Aorta (tissue), 5 donors: ENCODE measurements at regions of chr6 and their contacts with region 1.

Region 1: GRCh38 chr6:144482142-144482541 is 197.0 kb downstream of the UTRN start:
- DNase-seq: peak; percentile 82 to 89
- ATAC-seq: peak; percentile 65
- H3K4me3 ChIP-seq: no peak overlapping the region
- H3K27ac ChIP-seq: no peak overlapping the region
- H3K4me1 ChIP-seq: peaks cover 3 to 7% of the 10 kb centered on the region in 2 donors
- H3K27me3 ChIP-seq: no peaks in the 10 kb centered on the region

Region 2: DNA sequence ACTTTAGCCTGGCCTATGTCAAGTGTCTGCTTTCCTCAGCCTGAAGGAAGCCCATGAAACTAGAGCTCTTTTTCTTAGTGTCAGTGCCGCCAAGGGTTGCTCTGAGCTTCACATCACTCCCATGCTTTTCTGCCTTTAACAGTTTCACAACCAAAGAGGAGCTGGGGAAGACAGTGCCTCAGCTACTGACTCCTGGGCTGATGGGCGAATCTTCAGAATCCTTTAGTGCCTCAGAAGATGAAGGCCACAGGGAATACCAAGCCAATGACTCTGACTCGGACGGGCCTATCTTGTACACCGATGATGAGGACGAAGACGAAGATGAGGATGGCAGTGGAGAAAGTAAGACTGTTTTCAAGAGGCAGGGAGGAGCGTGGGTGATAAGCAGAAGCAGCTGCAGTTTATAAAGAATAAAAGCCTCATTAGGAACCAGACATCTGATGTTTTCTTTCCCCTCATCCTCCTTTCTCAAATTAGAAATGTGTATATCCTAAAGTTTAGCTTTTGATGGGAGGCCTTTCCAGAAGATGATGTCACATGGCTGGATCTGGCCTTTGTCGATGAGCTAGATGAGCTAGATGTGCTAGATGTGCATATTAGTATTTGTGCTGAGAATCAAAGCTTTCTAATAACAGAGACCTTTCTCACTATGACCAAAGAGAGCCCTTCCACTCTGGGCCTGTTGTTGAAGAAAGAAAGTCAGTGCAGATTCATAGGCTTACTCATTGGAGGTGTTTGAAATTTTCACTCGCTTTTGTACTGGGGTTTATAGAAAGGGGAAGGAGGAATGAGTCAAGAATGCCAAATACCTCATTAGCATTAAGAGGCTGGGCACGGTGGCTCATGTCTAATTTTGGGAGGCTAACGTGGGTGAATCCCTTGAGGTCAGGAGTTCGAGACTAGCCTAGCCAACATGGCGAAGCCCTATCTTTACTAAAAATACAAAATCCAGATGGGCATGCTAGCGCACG is 709.7 kb before region 1 on chr6:
- intact Hi-C with region 1: no loop called
- DNase-seq: no peak
- ATAC-seq: no peak
- H3K4me3 ChIP-seq: no peak overlapping the region
- H3K27ac ChIP-seq: no peak overlapping the region
- H3K4me1 ChIP-seq: peaks cover 7% of the 10 kb centered on the region in 2 donors
- H3K27me3 ChIP-seq: no peaks in the 10 kb centered on the region

Region 3: GRCh38 chr6:144095331-144096002 is 386.7 kb before region 1 on chr6 and contains the start of gene SF3B5:
- intact Hi-C with region 1: loop called in 1 of 2 experiments (anchors 5 kb)
- DNase-seq: peak; percentile 99 to 100
- ATAC-seq: peak; percentile 100
- H3K4me3 ChIP-seq: peak within 1 kb of the TSS; percentile 50 to 81
- H3K27ac ChIP-seq: peak within 1 kb of the TSS; percentile 11 to 15
- H3K4me1 ChIP-seq: peaks cover 0 to 6% of the 10 kb centered on the region in 2 donors
- H3K27me3 ChIP-seq: no peaks in the 10 kb centered on the region
- total RNA-seq, gene SF3B5: 75.2 to 82.4 TPM

Region 4: DNA sequence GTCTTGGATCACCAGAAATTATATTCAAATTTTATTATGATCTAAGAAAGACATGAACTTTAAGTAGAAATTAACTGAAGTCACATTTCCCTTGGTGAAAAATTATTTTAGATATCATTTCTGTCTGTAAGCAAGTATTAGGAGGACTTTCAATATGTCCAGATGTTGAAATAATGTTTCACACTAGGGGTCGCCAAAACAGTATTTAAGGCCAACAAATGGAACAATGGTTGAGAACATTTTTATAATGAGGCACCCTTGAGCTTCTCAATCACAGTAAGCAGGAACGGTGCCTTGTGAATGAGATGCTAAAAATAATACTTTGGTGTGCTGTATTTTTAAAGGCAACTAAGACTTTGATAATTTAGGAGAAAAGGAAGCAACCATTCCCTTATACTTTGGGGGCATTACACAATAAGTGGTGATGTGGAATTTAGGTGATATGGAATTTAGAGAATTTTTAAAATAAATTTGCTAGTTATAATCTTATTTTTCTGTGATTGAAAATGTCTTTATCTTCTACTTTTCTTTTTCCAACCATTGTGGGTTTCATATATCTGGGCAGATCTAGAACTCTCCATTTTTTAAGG is 377.1 kb before region 1 on chr6:
- intact Hi-C with region 1: loop called (anchors 5 kb)
- DNase-seq: no peak
- ATAC-seq: peak; percentile 85
- H3K4me3 ChIP-seq: no peak overlapping the region
- H3K27ac ChIP-seq: no peak overlapping the region
- H3K4me1 ChIP-seq: no peaks in the 10 kb centered on the region
- H3K27me3 ChIP-seq: no peaks in the 10 kb centered on the region

Region 5: DNA sequence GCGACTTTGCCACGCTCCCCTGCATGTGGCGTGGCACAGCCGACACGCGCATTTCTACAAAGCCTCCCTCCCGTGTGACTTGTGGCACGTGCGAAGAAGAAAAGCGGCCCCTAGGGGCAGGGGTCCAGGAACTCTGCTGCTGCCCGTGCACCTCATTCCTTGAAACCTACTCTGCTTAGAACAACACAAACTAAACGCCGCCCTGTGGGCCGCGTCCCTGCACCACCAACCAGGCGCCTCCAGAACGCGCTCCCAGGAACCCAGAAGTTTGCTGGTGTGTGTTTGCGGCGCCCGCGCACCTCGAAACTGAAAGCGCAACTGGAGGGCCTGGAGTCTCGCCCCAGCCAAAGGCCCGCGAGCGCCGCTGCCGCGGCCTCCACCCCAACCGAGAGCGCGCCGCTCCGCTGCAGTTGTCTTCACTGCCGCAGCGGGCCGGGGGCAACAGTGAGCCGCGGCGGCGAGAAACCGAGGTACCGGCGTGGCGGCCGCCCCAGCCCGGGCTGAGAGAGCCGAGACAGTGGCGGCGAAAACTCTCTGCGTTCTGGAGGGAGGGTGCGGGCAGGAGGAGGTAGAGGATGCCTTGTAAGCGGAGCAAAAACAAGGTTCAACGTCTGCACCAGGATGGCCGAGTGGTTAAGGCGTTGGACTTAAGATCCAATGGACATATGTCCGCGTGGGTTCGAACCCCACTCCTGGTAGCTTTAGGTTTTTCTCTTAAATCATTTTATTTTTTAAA is 266.0 kb before region 1 on chr6:
- intact Hi-C with region 1: loop called in 1 of 2 experiments (anchors 1 kb)
- DNase-seq: peak; percentile 95 to 97
- ATAC-seq: peak; percentile 97
- H3K4me3 ChIP-seq: peak overlapping the region; percentile 48 to 87
- H3K27ac ChIP-seq: peak overlapping the region; percentile 31 to 87
- H3K4me1 ChIP-seq: no peaks in the 10 kb centered on the region
- H3K27me3 ChIP-seq: no peaks in the 10 kb centered on the region